AG04449 (cell line): ENCODE measurements at regions of chr9 and their contacts with region 1.

Region 1: GRCh38 chr9:6353851-6354686 is 25.9 kb downstream of the TPD52L3 start:
- DNase-seq: no peak
- H3K4me3 ChIP-seq: no peak overlapping the region
- CTCF ChIP-seq: peak; percentile 69

Region 2: GRCh38 chr9:6230037-6230760 is 123.9 kb before region 1 on chr9:
- CTCF ChIA-PET with region 1: no interaction called
- POLR2A ChIA-PET with region 1: no interaction called
- DNase-seq: no peak
- H3K4me3 ChIP-seq: no peak overlapping the region
- CTCF ChIP-seq: no peak

Region 3: GRCh38 chr9:6367128-6367890 is 13.2 kb after region 1 on chr9:
- CTCF ChIA-PET with region 1: interaction called, 31 read pairs
- POLR2A ChIA-PET with region 1: no interaction called
- DNase-seq: no peak
- H3K4me3 ChIP-seq: no peak overlapping the region
- CTCF ChIP-seq: no peak

Region 4: GRCh38 chr9:6471231-6471850 is 117.3 kb after region 1 on chr9:
- CTCF ChIA-PET with region 1: interaction called, 10 read pairs
- POLR2A ChIA-PET with region 1: no interaction called
- DNase-seq: no peak
- H3K4me3 ChIP-seq: no peak overlapping the region
- CTCF ChIP-seq: no peak

Region 5: DNA sequence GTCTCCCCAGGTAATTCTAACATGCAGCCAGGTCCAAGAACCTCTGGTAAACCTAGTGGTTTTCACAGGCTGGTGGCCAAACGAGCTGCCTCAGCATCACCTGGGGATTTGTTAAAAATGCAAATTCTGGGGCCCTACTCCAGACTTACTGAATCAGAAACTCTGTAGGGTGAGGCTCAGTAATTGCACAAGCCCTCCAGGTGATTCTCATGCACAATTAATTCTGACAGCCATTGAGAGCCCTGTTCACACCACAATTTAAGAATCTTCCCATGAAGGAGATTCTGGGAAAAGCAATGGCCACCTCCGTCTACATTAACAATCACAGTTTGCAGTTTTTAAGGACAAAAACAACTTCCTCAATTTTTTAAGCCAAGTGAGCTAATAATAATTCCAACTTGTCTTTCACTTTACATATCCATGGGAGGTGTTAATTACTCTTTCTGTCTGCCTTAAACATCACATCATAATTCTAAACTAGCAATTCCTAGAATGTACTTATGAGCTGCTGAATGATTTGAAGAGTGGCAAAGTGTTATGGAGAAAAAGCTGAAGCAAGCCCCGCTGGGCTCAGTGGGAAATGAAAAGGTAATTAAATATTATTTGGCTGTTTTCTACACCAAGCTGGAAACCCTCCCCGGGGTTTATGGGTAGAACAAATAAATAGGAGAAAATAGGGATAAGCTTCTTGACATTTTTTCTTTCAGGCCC is 221.4 kb after region 1 on chr9:
- CTCF ChIA-PET with region 1: interaction called, 330 read pairs
- POLR2A ChIA-PET with region 1: no interaction called
- DNase-seq: no peak
- H3K4me3 ChIP-seq: no peak overlapping the region
- CTCF ChIP-seq: no peak

Region 6: GRCh38 chr9:6667633-6668280 is 313.7 kb after region 1 on chr9:
- CTCF ChIA-PET with region 1: interaction called, 21 read pairs
- POLR2A ChIA-PET with region 1: no interaction called
- DNase-seq: no peak
- H3K4me3 ChIP-seq: no peak overlapping the region
- CTCF ChIP-seq: peak; percentile 24

Region 7: GRCh38 chr9:6703898-6704639 is 350.0 kb after region 1 on chr9:
- CTCF ChIA-PET with region 1: no interaction called
- POLR2A ChIA-PET with region 1: no interaction called
- DNase-seq: no peak
- H3K4me3 ChIP-seq: peak overlapping the region; percentile 69
- CTCF ChIP-seq: no peak

Region 8: GRCh38 chr9:7536310-7536939 is 1182.4 kb after region 1 on chr9:
- CTCF ChIA-PET with region 1: no interaction called
- POLR2A ChIA-PET with region 1: no interaction called
- DNase-seq: no peak
- H3K4me3 ChIP-seq: no peak overlapping the region
- CTCF ChIP-seq: peak; percentile 66